Psoas muscle (tissue), 8 donors: ENCODE measurements at regions of chrX and their contacts with region 1.

Region 1: GRCh38 chrX:56281789-56282188 is 49.6 kb downstream of the KLF8 start:
- DNase-seq: no peak
- ATAC-seq: no peak
- H3K4me3 ChIP-seq: no peak overlapping the region
- H3K27ac ChIP-seq: no peak overlapping the region
- H3K4me1 ChIP-seq: no peaks in the 10 kb centered on the region
- H3K27me3 ChIP-seq: peaks cover 0 to 12% (median 0%) of the 10 kb centered on the region in 3 donors
- CTCF ChIP-seq: peak; percentile 21

Region 2: DNA sequence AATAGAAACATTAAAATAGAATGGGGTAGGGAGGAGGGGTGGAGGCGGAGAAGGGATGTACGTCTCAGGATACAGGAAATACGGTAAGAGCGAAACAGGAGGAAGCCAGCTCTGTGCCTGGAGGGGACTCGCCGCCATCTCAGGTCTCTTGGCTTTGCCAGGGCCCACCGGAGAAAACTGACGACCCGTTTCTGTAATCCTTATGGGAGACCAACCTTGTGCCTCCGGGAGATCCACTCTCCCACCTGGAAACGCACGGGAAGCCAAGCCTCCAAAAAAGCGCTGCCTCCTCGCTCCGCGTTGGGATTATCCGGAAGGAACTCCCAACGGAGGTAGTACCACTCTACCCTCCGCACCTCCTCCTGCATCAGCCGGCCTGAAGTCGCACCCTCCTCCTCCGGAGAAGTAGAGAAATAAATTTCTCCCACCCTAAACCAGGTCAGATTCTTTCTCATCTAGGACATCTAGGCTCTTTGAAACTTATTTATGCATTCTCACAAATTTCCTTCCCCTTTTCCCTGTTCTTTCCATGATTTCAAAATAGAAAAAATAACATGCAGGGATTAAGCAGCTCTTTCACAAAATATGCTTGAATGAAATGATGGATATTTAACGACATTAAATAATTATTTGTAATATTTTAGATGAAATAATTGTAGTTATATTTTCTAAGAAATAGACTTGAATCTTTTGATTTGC is 447.5 kb after region 1 on chrX and contains the start of gene NBDY:
- intact Hi-C with region 1: loop called in 1 of 2 experiments (anchors 5 kb)
- DNase-seq: peak; percentile 16 to 48
- ATAC-seq: peak in 3 of 4 donors; percentile 66 to 83 (median 71)
- H3K4me3 ChIP-seq: peak within 1 kb of the TSS; percentile 67
- H3K27ac ChIP-seq: peak within 1 kb of the TSS; percentile 54
- H3K4me1 ChIP-seq: no peaks in the 10 kb centered on the region
- H3K27me3 ChIP-seq: peaks cover 0 to 57% (median 0%) of the 10 kb centered on the region in 3 donors
- CTCF ChIP-seq: no peak
- total RNA-seq, gene NBDY: 5.3 to 15.6 (median 8.5) TPM